ENCODE measurements at regions of chr14 and their contacts with region 1.

Region 1: DNA sequence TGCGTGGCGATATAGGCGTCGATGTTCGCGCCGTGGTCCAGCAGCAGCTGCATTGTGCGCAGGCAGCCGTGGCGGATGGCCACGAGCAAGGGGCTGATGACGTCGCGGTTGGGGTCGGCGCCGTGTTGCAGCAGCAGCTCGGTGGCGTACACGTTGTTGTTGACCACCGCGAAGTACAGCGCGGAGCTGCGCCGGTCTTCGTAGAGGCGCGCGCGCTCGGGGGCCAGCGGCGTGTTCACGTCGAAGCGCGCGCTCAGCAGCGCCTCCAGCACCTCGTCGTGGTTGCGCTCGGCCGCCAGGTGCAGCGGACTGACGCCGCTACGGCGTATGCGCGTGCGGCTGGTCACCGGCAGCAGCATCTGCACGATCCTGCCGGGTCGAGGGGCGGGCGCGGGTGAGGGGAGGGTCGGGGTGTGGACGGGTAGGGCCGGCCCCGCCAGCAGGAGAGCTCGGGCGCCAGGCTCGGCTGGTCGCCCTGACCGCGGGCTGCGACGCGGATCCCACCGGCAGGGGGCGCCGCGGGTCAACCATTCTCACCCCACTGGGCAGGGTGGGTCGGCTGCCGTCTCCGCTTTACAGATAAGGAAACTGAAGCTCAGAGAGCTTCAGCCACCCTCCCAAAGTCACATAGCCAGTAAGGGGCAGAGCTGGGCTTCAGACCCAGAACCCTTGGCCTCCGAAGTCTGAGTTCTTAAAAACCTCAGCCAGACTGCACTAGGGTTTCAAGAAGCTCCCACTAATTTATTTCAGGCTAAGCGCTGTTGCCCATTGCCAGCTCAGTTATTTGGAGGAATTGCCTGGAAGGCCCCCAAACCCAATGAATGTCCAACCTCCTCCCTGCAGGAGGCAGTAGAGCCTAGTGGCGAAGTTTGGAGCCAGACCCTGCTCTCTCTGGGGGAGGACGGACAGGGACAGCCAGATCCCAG is 12.4 kb downstream of the FAM181A start:
- DNase-seq: peak; percentile 93
- CTCF ChIP-seq: peak; percentile 86

Region 2: DNA sequence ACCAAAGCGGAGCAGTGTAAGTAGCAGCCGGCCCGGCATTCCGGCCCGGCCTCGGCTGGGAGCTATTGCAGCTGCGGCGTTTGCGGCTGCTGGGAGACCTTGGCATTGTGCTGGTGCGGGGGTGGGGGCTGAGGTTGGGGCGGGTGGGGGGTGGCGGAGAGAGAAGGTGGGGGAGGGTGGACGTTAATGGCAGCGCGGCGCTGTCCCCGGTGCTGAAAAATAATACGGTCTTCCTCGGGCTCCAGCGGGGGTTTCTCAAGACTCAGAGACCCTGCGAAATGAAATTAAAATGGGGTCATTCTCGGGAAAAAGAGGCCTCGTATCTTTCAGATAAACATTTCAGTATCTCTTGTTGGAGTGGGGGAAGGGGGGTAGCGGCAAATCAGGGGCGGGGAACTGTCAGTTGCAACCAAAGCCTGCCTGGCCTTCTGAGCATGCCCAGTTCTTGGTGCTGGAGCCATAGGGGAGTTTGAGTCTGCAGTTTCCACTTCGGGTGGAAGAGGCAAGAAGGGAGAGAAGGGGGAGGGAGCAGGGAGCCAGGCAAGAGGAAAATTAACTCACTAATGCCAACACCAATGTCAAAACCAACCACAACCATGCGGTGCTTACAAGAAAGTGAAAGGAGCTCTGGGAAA is 508.4 kb before region 1 on chr14:
- in situ Hi-C with region 1: no loop called
- DNase-seq: peak; percentile 21
- CTCF ChIP-seq: no peak

Region 3: DNA sequence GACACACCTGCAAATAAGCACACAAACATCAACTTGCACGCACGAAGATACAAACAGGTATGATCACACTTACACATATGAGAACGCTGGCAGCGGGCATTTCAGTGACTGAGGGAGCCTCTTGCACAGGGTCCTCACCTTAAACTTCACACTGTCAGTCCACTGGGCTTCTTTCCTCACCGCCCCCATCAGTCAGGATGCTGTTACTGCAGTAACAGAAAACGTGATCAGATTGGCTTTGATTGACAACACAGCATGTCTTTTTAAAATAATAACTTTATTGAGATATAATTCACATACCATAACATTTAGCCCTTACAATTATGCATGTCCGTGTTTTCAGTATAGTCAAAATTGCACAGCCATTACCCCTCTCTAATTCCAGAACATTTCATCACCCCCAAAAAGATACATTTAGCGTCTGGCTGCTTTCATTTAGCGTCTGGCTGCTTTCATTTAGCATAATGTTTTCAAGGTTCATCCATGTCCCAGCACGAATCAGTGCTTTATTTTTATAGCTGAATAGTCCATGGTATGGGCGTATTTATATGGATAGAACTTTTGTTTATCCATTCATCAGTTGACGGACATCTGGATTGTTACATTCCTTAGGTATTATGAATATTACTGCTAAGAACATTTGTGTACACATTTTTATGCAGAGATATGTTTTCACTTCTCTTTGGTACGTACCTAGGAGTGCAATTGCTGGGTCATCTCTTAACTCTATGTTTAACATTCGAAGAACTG is 65.9 kb after region 1 on chr14:
- in situ Hi-C with region 1: loop called (anchors 5 kb)
- DNase-seq: peak; percentile 59
- CTCF ChIP-seq: no peak

Region 4: DNA sequence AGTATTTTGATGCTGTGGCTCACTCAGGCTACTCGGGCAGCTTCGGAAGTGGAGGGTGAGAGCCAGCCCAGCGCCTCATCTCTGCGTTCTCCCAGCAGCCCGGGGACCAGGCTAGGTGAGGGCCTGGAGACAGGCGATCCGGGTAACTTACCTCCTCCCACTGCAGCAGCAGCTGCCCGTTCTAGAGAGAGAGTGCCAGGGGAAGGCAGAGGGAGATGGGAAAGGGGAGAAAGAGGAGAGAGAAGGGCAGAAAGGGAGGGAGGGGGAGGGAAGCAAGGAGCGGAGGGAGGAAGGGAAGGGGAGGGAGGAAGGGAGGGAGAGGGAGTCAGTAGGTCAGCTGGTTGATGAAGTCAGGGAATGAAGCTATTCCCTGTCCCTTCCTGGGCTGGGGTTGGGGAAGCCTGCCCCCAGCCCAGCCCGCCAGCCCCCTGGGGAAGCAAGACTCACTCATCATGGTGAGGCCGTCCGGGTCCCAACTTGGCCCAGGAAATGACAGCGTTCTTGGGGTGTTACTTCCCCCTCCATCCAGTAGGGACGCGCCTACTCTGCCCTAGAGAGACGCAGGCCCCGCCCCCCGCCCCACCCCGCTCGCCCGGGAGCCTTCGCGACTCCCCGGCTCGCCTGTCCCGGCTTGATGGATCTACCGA is 189.7 kb after region 1 on chr14 and contains the start of gene IFI27L2:
- in situ Hi-C with region 1: loop called (anchors 10 kb)
- DNase-seq: peak; percentile 95
- CTCF ChIP-seq: peak; percentile 8